Sciatic nerve (tissue), 2 donors: ENCODE measurements at regions of chr2 and their contacts with region 1.

Region 1: DNA sequence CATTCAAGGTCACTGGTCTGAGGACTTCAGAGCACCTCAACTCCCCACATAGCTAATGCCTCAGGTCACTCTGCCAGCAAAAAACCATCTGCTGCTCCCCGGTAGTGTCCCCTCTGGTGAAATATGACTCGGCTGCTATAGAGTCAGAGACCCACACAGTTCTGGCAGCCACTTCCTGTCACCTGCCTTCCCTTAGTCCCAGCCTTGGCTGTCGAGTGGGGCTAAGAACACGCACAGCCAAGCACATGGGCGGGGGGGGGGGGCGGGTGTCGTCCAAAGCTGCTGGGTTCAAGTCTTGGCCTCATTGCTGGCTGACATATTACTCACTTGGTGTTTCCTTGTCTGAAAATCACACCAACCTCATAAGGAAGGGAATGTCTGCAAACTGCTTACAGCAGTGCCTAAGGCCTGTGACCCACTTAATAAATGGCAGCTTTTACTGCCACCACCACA is 37.5 kb downstream of the POLR1A start:
- DNase-seq: no peak
- ATAC-seq: no peak

Region 2: GRCh38 chr2:85611705-85612587 is 456.2 kb before region 1 on chr2 and contains the start of gene C2orf68:
- intact Hi-C with region 1: loop called (anchors 10 kb)
- DNase-seq: peak; percentile 95
- ATAC-seq: peak; percentile 92
- total RNA-seq, gene C2orf68: 41.6 TPM

Region 3: GRCh38 chr2:85694052-85695025 is 373.8 kb before region 1 on chr2 and contains the start of gene GNLY:
- intact Hi-C with region 1: no loop called
- DNase-seq: no peak
- ATAC-seq: no peak
- total RNA-seq, gene GNLY: 8.4 TPM

Region 4: DNA sequence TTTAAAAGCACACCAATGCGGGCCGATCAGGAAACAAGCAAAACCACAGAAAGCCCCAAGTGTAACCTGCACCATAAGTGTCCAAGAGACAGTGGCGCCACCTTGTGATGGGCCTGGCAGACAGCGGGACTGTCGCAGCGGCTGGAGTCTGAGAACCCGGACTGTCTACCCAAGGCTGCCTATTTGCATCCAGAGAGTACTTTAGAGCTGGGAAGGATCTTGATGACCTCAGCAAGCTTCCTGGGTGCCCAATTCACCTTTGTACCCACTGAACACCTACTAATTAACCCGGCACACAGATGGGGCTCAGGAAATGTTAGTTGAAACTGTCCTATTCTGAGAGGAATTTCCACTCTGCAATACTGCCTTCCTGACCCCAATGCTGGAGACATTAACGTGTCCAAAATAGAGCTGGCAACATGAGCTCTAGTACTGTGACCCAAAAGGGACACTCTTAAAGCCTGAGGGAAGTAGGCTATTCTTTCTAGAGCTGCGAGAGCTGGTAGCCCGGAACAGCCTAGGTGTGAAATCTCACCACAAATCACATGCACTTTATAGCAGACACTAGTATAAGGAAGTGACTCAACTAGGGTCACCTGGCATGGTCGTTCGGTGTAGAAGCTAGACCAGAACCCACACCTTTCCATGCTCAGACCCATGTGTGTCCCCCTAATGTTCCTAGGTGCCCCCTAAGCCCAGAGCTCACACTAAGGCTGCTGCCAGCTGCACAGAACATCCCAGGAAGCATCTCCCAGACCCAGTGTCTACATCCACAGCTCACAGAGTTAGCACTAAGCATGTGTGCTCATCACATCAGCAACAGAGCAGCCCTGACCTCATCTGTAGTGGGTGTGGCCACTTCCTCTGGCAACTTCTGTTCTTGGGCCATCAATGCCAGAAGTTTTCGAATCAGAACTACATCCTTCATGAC is 12.1 kb after region 1 on chr2:
- intact Hi-C with region 1: no loop called
- DNase-seq: peak; percentile 91
- ATAC-seq: peak; percentile 89